ENCODE measurements at regions of chr1 and their contacts with region 1.

Region 1: DNA sequence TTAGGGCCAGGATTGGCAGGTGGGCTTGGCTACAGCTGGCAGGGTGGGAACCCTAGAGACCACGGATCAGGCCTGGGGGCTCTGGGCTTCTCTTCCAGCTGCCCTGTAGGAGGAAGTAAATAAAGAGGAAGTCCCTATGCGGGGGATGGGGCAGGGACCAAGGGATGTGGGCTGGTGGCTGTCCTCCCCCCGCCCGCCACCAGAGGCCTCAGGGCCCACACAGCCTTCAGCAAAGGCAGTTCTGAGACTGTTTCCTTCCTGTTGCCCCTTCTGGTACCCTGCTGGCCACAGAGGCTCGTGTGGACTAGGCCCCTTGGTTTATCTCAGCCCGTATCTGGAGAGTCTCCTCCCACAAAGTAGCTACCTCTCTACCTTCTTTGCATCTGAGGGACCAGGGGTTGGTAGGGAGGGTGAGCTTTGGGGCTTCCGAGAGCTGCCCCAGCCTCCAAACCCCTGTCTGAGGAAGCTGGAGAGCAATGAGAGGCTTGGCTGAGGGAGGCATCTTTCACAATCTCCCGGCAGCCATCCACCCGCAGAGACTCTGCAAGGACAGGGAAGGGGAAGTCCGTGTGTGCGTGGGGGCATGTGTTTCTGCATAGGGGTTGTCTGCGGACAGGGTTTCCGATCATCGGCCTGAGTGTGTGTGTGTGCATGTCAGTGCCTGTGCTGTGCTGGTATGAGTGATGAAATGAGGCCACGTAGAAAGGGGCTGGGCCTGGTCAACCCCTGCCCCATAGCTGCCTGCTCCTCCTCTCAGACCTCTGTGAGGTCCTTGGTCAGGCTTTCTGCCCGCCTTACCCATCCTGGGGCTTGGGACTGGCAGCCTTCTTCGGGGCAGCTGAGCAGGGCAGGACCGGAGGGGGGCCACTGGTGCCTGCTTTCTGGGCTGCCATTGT is 12.5 kb downstream of the RPS6KA1 start:
- DNase-seq: peak; percentile 88
- ATAC-seq: peak; percentile 76
- H3K4me3 ChIP-seq: peak overlapping the region; percentile 95
- H3K27ac ChIP-seq: peak overlapping the region; percentile 97
- H3K4me1 ChIP-seq: peaks cover 68% of the 10 kb centered on the region
- H3K27me3 ChIP-seq: no peaks in the 10 kb centered on the region
- CTCF ChIP-seq: peak; percentile 52 to 82 (median 71)
- EP300 ChIP-seq: peak in 1 of 2 experiments; percentile 59; a peak in 3 of 4 replicates
- POLR2A ChIP-seq: peak; percentile 80
- RAD21 ChIP-seq: no peak; the same call in 1 of the 2 replicates

Region 2: GRCh38 chr1:26156704-26157038 is 385.4 kb before region 1 on chr1:
- CTCF ChIA-PET with region 1: no interaction called
- POLR2A ChIA-PET with region 1: no interaction called
- RAD21 ChIA-PET with region 1: no interaction called
- SMC1A ChIA-PET with region 1: no interaction called
- in situ Hi-C with region 1: no loop called
- intact Hi-C with region 1: no loop called
- DNase-seq: no peak
- ATAC-seq: no peak
- H3K4me3 ChIP-seq: no peak overlapping the region
- H3K27ac ChIP-seq: no peak overlapping the region
- H3K4me1 ChIP-seq: no peaks in the 10 kb centered on the region
- H3K27me3 ChIP-seq: peaks cover 1 to 12% of the 10 kb centered on the region in 2 experiments
- CTCF ChIP-seq: no peak
- EP300 ChIP-seq: no peak
- POLR2A ChIP-seq: no peak
- RAD21 ChIP-seq: no peak

Region 3: DNA sequence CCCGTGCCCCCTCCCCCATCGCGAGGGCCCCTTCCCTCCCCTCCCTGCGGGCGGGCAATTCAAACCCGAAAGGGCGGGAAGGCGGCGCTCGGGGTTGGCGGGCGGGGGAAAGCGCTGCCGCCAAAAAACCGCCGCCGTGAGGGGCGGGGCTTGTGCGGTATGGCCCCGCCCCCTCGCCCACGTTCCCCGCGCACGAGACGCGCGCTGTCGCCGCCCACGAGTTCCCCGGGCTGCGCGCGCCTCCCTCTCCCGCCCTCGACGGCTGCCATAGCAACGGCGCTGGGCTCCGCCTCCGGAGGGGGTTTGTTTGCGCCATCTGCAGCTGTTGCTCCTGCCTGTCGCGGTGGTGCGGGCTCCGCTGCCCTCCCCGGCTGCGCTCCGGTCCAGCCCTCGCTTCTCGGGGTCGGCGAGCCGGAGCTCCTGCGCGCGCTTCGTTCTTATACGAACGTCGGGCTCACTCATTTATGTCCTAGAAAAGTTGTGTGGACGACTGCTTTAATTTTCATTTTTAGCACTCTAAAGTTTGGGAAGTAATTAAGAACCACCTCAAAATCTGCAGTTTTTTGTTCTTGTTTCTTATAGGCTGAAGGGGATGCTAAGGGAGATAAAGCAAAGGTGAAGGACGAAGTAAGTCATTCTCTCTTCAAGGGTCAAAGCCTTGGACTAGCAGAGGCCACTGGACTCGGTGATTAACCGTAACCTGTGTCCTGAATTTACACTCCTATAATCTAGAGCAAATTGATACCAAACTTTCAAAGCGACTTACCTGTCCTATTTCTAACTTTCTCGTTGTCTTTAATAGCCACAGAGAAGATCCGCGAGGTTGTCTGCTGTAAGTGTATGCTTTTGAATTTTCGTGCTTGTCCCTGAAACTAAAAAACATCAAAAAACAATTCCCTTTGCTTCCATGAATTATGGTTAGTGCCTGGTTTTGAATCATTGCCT is 68.9 kb before region 1 on chr1:
- CTCF ChIA-PET with region 1: interaction called, 12 read pairs
- POLR2A ChIA-PET with region 1: no interaction called
- RAD21 ChIA-PET with region 1: interaction called, 3 read pairs
- SMC1A ChIA-PET with region 1: no interaction called
- in situ Hi-C with region 1: no loop called
- intact Hi-C with region 1: no loop called
- DNase-seq: peak; percentile 67
- ATAC-seq: peak; percentile 81
- H3K4me3 ChIP-seq: peak overlapping the region; percentile 84
- H3K27ac ChIP-seq: peak overlapping the region; percentile 98
- H3K4me1 ChIP-seq: peaks cover 19% of the 10 kb centered on the region
- H3K27me3 ChIP-seq: no peaks in the 10 kb centered on the region
- CTCF ChIP-seq: no peak
- EP300 ChIP-seq: no peak
- POLR2A ChIP-seq: peak; percentile 53
- RAD21 ChIP-seq: no peak

Region 4: GRCh38 chr1:26524181-26524580 is 17.9 kb before region 1 on chr1:
- CTCF ChIA-PET with region 1: interaction called, 90 read pairs
- POLR2A ChIA-PET with region 1: interaction called, 19 read pairs
- RAD21 ChIA-PET with region 1: interaction called, 6 read pairs
- SMC1A ChIA-PET with region 1: interaction called, 21 read pairs
- in situ Hi-C with region 1: no loop called
- intact Hi-C with region 1: no loop called
- DNase-seq: no peak
- ATAC-seq: no peak
- H3K4me3 ChIP-seq: no peak overlapping the region
- H3K27ac ChIP-seq: no peak overlapping the region
- H3K4me1 ChIP-seq: peaks cover 10% of the 10 kb centered on the region; the same call in 1 of the 2 replicates
- H3K27me3 ChIP-seq: no peaks in the 10 kb centered on the region
- CTCF ChIP-seq: no peak
- EP300 ChIP-seq: no peak
- POLR2A ChIP-seq: no peak
- RAD21 ChIP-seq: no peak

Region 5: DNA sequence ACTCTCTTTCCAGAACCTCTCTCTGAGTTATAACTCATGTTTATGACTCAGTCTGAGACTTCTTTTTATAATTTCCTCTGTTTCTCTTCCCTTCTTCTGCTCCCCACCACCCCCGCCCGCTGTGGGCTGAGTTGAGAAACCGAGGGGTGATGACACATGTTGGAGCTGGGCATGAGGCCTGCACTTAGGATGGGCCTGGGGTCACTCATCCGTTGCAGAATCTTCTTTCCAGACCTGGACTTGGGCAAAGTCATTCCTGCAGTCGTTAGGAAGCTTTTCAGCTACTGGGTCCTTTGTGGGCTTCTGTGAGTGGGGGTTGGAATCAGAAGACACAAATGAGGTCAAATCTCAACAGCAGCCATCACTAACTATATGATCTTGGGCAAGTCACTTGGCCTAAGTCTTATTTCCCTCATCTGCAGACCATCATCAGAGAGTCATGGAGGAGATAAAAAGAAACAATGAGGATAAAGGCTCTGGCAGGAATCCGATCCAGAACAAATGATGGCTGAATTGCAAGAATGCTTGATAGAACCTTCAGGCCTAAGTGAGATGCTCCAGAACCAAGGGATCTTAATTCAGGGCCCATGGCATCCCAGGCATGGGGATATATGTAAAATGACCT is 40.9 kb after region 1 on chr1:
- CTCF ChIA-PET with region 1: interaction called, 123 read pairs
- POLR2A ChIA-PET with region 1: interaction called, 9 read pairs
- RAD21 ChIA-PET with region 1: interaction called, 18 read pairs
- SMC1A ChIA-PET with region 1: interaction called, 15 read pairs
- in situ Hi-C with region 1: no loop called
- intact Hi-C with region 1: loop called (anchors 2 kb)
- DNase-seq: peak; percentile 56
- ATAC-seq: peak; percentile 67
- H3K4me3 ChIP-seq: no peak overlapping the region
- H3K27ac ChIP-seq: peak overlapping the region; percentile 87
- H3K4me1 ChIP-seq: peaks cover 56% of the 10 kb centered on the region
- H3K27me3 ChIP-seq: no peaks in the 10 kb centered on the region
- CTCF ChIP-seq: no peak
- EP300 ChIP-seq: peak in 1 of 2 experiments; percentile 70; a peak in 1 of 4 replicates
- POLR2A ChIP-seq: no peak
- RAD21 ChIP-seq: no peak

Region 6: GRCh38 chr1:26695356-26696118 is 153.5 kb after region 1 on chr1 and contains the start of gene ARID1A:
- CTCF ChIA-PET with region 1: interaction called, 4 read pairs
- POLR2A ChIA-PET with region 1: interaction called, 8 read pairs
- RAD21 ChIA-PET with region 1: interaction called, 4 read pairs
- SMC1A ChIA-PET with region 1: no interaction called
- in situ Hi-C with region 1: no loop called
- intact Hi-C with region 1: loop called (anchors 5 kb)
- DNase-seq: peak; percentile 82
- ATAC-seq: peak; percentile 69
- H3K4me3 ChIP-seq: peak within 1 kb of the TSS; percentile 98
- H3K27ac ChIP-seq: peak within 1 kb of the TSS; percentile 98
- H3K4me1 ChIP-seq: peaks cover 13% of the 10 kb centered on the region
- H3K27me3 ChIP-seq: no peaks in the 10 kb centered on the region
- CTCF ChIP-seq: no peak
- EP300 ChIP-seq: peak in 1 of 2 experiments; percentile 74; a peak in 1 of 4 replicates
- POLR2A ChIP-seq: peak; percentile 97
- RAD21 ChIP-seq: peak; percentile 27; the same call in 1 of the 2 replicates
- polyA plus RNA-seq, gene ARID1A: 10.0 to 24.5 TPM

Measured in GM12878 (cell line).